Sciatic nerve (tissue), 2 donors: ENCODE measurements at regions of chr1 and their contacts with region 1.

Region 1: GRCh38 chr1:8314346-8315280 is 3.3 kb upstream of the SLC45A1 start:
- DNase-seq: peak; percentile 83
- ATAC-seq: peak; percentile 88

Region 2: DNA sequence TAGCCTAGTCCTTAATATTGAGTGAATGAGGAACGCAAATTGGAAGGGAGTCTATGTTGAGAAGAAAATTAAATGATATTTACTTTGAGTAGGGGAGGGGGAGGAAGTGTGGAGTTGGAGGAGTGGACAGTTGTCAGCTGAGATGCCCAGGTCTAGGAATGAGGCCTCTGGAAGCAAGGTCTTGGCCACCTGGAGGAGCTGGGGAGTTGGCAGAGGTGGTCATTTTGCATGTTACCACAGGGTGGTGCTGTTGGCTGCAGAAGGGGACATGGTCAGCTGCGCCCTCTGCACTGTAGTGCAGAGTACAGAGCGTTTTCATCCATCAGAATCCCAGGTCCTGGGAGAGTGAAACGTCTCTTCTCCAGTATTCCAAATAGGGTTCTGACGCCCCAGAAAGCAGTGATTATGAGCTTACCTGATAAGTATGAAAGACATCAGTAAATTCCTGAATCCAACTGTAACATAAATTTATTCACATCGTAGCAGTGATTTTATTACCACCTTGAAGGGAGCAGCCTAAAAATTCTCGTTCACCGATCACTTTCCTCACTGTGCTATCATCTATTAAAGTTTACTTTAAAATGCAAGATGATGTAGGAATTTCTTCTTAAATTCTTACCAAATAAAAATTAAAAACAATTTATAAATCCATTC is 339.3 kb before region 1 on chr1:
- intact Hi-C with region 1: loop called (anchors 10 kb)
- DNase-seq: peak; percentile 79
- ATAC-seq: peak; percentile 93